Heart right ventricle (tissue), 16 donors: ENCODE measurements at regions of chr11 and their contacts with region 1.

Region 1: GRCh38 chr11:8006349-8006977 is 19.3 kb downstream of the EIF3F start:
- DNase-seq: peak in 1 of 2 donors; percentile 71
- ATAC-seq: peak; percentile 82 to 93 (median 89)
- H3K4me3 ChIP-seq: no peak overlapping the region
- H3K27ac ChIP-seq: no peak overlapping the region
- H3K4me1 ChIP-seq: no peaks in the 10 kb centered on the region
- H3K27me3 ChIP-seq: no peaks in the 10 kb centered on the region
- CTCF ChIP-seq: peak; percentile 51 to 93 (median 85)

Region 2: DNA sequence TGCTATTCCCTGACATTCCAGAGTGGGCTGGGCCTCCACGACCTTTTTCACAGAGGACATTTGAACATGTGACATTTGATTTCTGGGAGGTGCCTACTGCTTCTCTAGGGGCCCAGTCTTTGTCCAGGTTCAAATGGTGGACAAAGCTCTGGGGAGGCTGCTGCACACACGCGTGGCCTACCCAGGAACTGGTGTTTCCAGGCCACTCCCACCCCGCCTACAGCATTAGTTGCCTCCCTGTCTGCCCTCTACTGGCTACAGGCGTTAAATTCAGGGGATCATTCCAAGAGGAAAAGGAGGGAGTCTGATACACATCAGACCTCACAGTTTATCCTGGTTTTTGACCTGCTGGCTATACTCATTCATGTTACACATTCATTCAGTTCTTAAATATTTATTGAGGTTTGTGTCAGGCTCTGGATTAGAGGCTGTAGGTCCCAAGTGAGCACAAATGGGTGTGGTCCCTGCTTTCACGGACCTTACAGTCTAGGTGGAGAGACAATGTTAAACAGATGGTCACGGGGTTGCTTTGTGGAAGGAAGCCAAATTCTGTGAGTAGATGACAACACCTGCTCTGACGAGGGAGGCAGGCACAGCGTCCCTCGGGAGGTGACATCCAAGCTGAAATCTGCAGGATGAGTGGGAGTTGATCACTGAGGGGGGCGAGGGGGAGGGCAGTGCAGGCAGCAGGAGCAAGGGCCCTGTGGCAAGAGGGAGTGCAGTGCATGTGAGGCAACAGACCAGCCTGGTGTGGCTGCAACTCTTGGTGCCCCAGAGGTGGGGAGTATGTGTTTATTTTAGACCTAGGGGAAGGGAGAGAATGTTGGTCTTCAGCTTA is 86.3 kb after region 1 on chr11:
- intact Hi-C with region 1: loop called in 9 of 10 experiments (anchors 1 to 5 kb)
- DNase-seq: peak; percentile 52 to 77
- ATAC-seq: peak; percentile 43 to 78 (median 65)
- H3K4me3 ChIP-seq: no peak overlapping the region
- H3K27ac ChIP-seq: no peak overlapping the region
- H3K4me1 ChIP-seq: peaks cover 0 to 17% (median 6%) of the 10 kb centered on the region in 9 donors
- H3K27me3 ChIP-seq: no peaks in the 10 kb centered on the region
- CTCF ChIP-seq: peak; percentile 40 to 78 (median 65)

Region 3: GRCh38 chr11:8099291-8099899 is 92.9 kb after region 1 on chr11:
- intact Hi-C with region 1: loop called in 9 of 10 experiments (anchors 1 to 5 kb)
- DNase-seq: peak; percentile 68 to 76
- ATAC-seq: peak in 7 of 8 donors; percentile 37 to 66 (median 63)
- H3K4me3 ChIP-seq: no peak overlapping the region
- H3K27ac ChIP-seq: no peak overlapping the region
- H3K4me1 ChIP-seq: no peaks in the 10 kb centered on the region
- H3K27me3 ChIP-seq: no peaks in the 10 kb centered on the region
- CTCF ChIP-seq: peak; percentile 60 to 89 (median 82)

Region 4: GRCh38 chr11:8566613-8567210 is 560.2 kb after region 1 on chr11:
- intact Hi-C with region 1: loop called in 1 of 10 experiments (anchors 10 kb)
- DNase-seq: no peak
- ATAC-seq: peak in 4 of 8 donors; percentile 8 to 44 (median 33)
- H3K4me3 ChIP-seq: no peak overlapping the region
- H3K27ac ChIP-seq: no peak overlapping the region
- H3K4me1 ChIP-seq: no peaks in the 10 kb centered on the region
- H3K27me3 ChIP-seq: peaks cover 0 to 7% (median 0%) of the 10 kb centered on the region in 7 donors
- CTCF ChIP-seq: peak; percentile 51 to 86 (median 70)